Activated CD4-positive, alpha-beta T cell treated with anti-CD3 and anti-CD28 coated beads for 36 hours (primary cell): ENCODE measurements at regions of chr7 and their contacts with region 1.

Region 1: DNA sequence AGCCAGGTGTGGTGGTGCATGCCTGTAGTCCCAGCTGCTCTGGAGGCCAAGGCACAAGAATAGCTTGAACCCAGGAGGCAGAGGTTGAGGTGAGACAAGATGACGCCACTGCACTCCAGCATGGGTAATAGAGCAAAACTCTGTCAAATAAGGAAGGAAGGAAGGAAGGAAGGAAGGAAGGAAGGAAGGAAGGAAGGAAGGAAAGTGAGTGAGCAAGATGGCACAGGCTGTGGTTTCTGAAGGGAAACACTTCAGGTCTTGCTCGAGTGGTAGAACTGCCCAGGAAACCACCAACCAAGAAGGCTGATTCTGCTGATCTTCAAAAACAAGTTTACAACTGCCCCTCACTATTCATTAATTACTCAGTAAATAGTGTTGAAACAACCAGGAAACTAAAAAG is 45.2 kb downstream of the EZH2 start:
- DNase-seq: no peak
- ATAC-seq: no peak
- H3K4me3 Mint-ChIP-seq: no peak overlapping the region
- H3K27ac Mint-ChIP-seq: peak overlapping the region; percentile 42
- H3K4me1 Mint-ChIP-seq: peaks cover 27% of the 10 kb centered on the region
- H3K27me3 Mint-ChIP-seq: no peaks in the 10 kb centered on the region

Region 2: GRCh38 chr7:148819697-148820360 is 19.1 kb before region 1 on chr7:
- CTCF ChIA-PET with region 1: interaction called, 3 read pairs
- POLR2A ChIA-PET with region 1: no interaction called
- intact Hi-C with region 1: loop called in 1 of 2 experiments (anchors 2 kb)
- DNase-seq: no peak
- ATAC-seq: no peak
- H3K4me3 Mint-ChIP-seq: no peak overlapping the region
- H3K27ac Mint-ChIP-seq: no peak overlapping the region
- H3K4me1 Mint-ChIP-seq: peaks cover 2% of the 10 kb centered on the region
- H3K27me3 Mint-ChIP-seq: no peaks in the 10 kb centered on the region

Region 3: DNA sequence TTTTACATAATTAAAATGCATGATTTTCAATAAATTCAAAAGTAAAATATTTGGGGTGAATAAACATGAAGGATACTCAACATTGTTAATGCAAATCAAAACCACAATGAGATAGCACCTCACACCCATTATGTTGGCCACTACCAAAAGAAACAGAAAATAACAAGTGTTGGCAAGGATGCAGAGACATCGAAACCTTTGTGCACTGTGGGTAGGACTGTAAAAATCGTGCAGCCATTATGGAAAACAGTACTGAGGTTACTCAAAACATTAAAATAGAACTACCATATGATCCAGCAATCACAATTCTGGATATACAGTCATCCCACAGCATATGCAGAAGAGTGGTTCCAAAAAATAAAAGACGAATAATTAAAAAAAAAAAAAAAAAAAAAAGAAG is 32.1 kb after region 1 on chr7:
- CTCF ChIA-PET with region 1: no interaction called
- POLR2A ChIA-PET with region 1: no interaction called
- intact Hi-C with region 1: loop called in 1 of 2 experiments (anchors 5 kb)
- DNase-seq: no peak
- ATAC-seq: peak; percentile 60
- H3K4me3 Mint-ChIP-seq: no peak overlapping the region
- H3K27ac Mint-ChIP-seq: no peak overlapping the region
- H3K4me1 Mint-ChIP-seq: peaks cover 52% of the 10 kb centered on the region
- H3K27me3 Mint-ChIP-seq: no peaks in the 10 kb centered on the region